GM12878 (cell line): ENCODE measurements at regions of chr17 and their contacts with region 1.

Region 1: GRCh38 chr17:48259694-48260291 is 152.2 kb downstream of the SNX11 start:
- DNase-seq: no peak
- ATAC-seq: no peak
- H3K4me3 ChIP-seq: no peak overlapping the region
- H3K27ac ChIP-seq: no peak overlapping the region
- H3K4me1 ChIP-seq: no peaks in the 10 kb centered on the region
- H3K27me3 ChIP-seq: no peaks in the 10 kb centered on the region
- CTCF ChIP-seq: peak; percentile 47 to 62 (median 61)
- EP300 ChIP-seq: no peak
- POLR2A ChIP-seq: no peak
- RAD21 ChIP-seq: peak; percentile 77

Region 2: GRCh38 chr17:48215583-48216139 is 44.1 kb before region 1 on chr17:
- CTCF ChIA-PET with region 1: interaction called, 11 read pairs
- POLR2A ChIA-PET with region 1: interaction called, 3 read pairs
- RAD21 ChIA-PET with region 1: interaction called, 5 read pairs
- SMC1A ChIA-PET with region 1: interaction called, 3 read pairs
- in situ Hi-C with region 1: no loop called
- intact Hi-C with region 1: no loop called
- DNase-seq: no peak
- ATAC-seq: peak; percentile 63
- H3K4me3 ChIP-seq: no peak overlapping the region
- H3K27ac ChIP-seq: no peak overlapping the region
- H3K4me1 ChIP-seq: no peaks in the 10 kb centered on the region
- H3K27me3 ChIP-seq: no peaks in the 10 kb centered on the region
- CTCF ChIP-seq: peak; percentile 25 to 53 (median 50); a peak in 5 of 6 replicates
- EP300 ChIP-seq: no peak
- POLR2A ChIP-seq: no peak
- RAD21 ChIP-seq: peak; percentile 67

Region 3: GRCh38 chr17:48283411-48283810 is 23.6 kb after region 1 on chr17:
- CTCF ChIA-PET with region 1: interaction called, 190 read pairs
- POLR2A ChIA-PET with region 1: no interaction called
- RAD21 ChIA-PET with region 1: interaction called, 5 read pairs
- SMC1A ChIA-PET with region 1: interaction called, 11 read pairs
- in situ Hi-C with region 1: no loop called
- intact Hi-C with region 1: no loop called
- DNase-seq: no peak
- ATAC-seq: no peak
- H3K4me3 ChIP-seq: no peak overlapping the region
- H3K27ac ChIP-seq: no peak overlapping the region
- H3K4me1 ChIP-seq: no peaks in the 10 kb centered on the region
- H3K27me3 ChIP-seq: no peaks in the 10 kb centered on the region
- CTCF ChIP-seq: no peak
- EP300 ChIP-seq: no peak
- POLR2A ChIP-seq: no peak
- RAD21 ChIP-seq: no peak

Region 4: DNA sequence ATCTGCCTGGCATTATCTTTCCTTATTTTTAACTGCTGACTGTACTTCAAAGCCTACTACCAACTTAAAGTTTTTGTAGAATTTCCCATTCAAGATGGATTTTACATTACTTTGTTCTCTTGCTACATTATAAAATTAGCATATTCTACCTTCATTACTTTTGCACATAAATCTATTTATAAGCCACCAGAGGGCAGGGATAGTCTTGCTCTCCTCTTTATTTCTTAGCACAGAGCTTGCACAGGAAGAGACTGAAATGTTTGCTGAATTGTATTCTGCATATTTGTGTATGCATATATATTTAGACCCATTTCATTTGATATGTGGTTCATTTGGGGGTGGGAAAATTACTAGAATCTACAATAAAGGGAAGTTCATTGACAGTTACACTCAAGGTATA is 62.3 kb after region 1 on chr17:
- CTCF ChIA-PET with region 1: interaction called, 8 read pairs
- POLR2A ChIA-PET with region 1: interaction called, 3 read pairs
- RAD21 ChIA-PET with region 1: no interaction called
- SMC1A ChIA-PET with region 1: interaction called, 12 read pairs
- in situ Hi-C with region 1: no loop called
- intact Hi-C with region 1: no loop called
- DNase-seq: no peak
- ATAC-seq: no peak
- H3K4me3 ChIP-seq: no peak overlapping the region
- H3K27ac ChIP-seq: no peak overlapping the region
- H3K4me1 ChIP-seq: no peaks in the 10 kb centered on the region
- H3K27me3 ChIP-seq: no peaks in the 10 kb centered on the region
- CTCF ChIP-seq: peak in 1 of 3 experiments; percentile 5; a peak in 1 of 6 replicates
- EP300 ChIP-seq: no peak
- POLR2A ChIP-seq: no peak
- RAD21 ChIP-seq: no peak

Region 5: DNA sequence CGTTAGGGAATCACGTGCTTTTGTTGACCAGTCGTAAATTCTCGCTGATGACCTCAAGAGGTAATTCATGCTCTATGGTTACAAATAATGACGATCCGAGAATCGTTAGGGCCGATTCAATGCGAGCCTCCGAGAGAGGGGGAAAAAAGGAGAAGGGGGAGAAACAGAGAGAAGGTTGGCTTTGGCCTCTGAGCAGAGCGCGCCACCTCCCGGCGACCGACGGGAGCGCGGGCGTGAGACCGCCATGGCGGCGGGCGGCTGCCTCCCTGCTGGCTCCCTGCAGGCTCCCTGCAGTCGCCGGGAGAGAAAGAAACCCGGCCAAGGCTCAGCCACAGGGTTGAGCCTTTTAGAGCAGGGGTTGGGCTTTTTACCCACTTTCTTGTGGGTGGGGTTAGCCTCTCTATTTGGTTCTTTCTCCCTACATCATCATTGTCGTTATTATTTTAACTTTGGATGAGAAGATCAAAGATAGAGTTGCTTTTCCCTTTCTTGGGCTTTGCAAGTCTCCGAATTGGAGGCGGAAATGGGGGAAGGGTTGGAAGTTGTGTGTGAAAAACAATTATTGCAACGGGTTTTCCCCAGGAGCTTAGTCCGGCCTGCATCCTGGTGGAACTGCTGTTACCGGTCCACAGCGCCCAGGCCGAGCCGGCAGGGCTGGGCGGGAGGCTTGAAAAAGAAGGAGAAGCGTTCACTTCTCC is 334.2 kb after region 1 on chr17:
- CTCF ChIA-PET with region 1: interaction called, 113 read pairs
- POLR2A ChIA-PET with region 1: no interaction called
- RAD21 ChIA-PET with region 1: interaction called, 21 read pairs
- SMC1A ChIA-PET with region 1: interaction called, 21 read pairs
- in situ Hi-C with region 1: loop called (anchors 5 kb)
- intact Hi-C with region 1: loop called (anchors 1 kb)
- DNase-seq: no peak
- ATAC-seq: peak; percentile 75
- H3K4me3 ChIP-seq: no peak overlapping the region; the same call in 1 of the 2 replicates
- H3K27ac ChIP-seq: no peak overlapping the region
- H3K4me1 ChIP-seq: peaks cover 10% of the 10 kb centered on the region
- H3K27me3 ChIP-seq: peaks cover 5 to 33% of the 10 kb centered on the region in 2 experiments
- CTCF ChIP-seq: peak; percentile 91 to 97 (median 94)
- EP300 ChIP-seq: no peak
- POLR2A ChIP-seq: no peak
- RAD21 ChIP-seq: peak; percentile 80